ENCODE measurements at regions of chr5 and their contacts with region 1.

Region 1: DNA sequence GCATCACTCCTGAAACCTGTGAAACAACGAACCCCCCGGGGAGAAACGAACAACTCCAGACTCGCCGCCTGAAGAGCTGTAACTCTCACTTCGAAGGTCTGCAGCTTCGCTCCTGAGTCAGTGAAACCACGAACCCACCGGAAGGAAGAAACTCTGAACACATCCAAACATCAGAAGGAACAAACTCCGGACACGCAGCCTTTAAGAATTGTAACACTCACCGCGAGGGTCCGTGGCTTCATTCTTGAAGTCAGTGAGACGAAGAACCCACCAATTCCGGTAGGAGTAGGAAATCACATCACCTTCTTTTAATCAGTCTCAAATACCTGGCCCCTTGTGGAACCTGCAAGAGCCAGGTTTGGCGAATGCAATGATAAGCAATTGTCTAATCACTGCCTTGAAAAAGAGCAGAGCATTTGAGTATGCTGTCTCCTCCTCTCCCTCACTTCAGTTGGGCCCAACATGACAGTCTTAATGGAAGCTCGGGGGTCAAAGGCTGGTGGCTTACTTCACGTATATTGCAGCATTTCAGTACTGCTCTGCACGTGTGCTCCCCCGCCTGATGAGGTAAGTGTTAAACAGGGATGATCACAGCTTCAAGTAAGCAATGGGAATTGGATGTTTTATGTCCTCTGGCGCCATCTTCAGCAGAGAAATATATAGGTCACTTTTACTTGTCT is 473 bp downstream of the IRGM start:
- DNase-seq: peak in 1 of 10 donors; percentile 51
- H3K4me3 ChIP-seq: peak overlapping the region in 2 of 59 donors; percentile 17 to 28
- H3K27ac ChIP-seq: no peak overlapping the region
- H3K27me3 ChIP-seq: no peaks in the 10 kb centered on the region
- CTCF ChIP-seq: peak; percentile 42 to 83 (median 66)

Region 2: DNA sequence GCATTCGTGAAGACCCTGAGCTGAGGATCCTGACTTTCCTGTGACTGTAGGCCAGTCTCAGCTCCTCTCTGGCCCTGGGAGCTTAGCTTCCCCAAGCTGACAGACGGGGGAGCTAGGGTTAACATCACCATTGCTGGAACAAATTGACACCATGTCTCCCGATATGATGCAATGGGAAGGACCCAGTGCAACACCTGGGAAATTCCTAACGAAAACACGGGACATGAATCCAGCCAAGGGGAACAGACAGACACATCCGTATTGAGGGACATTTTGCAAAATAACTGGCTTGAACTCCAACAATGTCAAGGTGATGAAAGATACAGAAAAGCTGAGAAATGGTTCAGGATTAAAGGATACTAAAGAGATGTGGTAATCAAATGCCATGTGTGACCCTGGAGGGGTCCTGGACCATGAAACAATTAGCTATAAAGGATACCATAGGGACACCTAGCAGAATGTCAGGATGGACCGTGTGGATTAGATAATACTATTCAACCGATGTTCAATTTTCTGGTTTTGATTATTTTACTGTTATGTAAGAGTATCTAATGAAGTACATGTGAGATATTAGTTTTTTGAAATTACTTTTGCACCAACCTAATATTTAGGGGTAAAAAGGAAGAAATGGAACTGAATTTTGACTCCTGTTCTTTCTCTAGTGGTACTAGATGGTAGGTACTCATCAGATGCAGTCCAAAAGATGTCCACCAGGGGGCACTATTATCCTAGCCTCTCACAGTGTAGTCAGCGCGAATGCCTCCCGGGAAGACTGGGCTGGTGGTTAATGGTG is 286.2 kb before region 1 on chr5:
- intact Hi-C with region 1: loop called (anchors 2 kb)
- DNase-seq: peak in 9 of 10 donors; percentile 71 to 97 (median 85)
- H3K4me3 ChIP-seq: no peak overlapping the region
- H3K27ac ChIP-seq: peak overlapping the region in 1 of 59 donors; percentile 36
- H3K27me3 ChIP-seq: no peaks in the 10 kb centered on the region
- CTCF ChIP-seq: peak; percentile 86 to 99 (median 97)

Region 3: GRCh38 chr5:150640311-150641005 is 206.3 kb before region 1 on chr5 and contains the start of gene SYNPO:
- intact Hi-C with region 1: no loop called
- DNase-seq: peak in 6 of 10 donors; percentile 56 to 79 (median 67)
- H3K4me3 ChIP-seq: peak within 1 kb of the TSS in 55 of 59 donors; percentile 4 to 61 (median 43)
- H3K27ac ChIP-seq: peak within 1 kb of the TSS in 58 of 59 donors; percentile 55 to 95 (median 86)
- H3K27me3 ChIP-seq: no peaks in the 10 kb centered on the region
- CTCF ChIP-seq: no peak
- total RNA-seq, gene SYNPO: 47.3 to 302 (median 180) TPM

Region 4: DNA sequence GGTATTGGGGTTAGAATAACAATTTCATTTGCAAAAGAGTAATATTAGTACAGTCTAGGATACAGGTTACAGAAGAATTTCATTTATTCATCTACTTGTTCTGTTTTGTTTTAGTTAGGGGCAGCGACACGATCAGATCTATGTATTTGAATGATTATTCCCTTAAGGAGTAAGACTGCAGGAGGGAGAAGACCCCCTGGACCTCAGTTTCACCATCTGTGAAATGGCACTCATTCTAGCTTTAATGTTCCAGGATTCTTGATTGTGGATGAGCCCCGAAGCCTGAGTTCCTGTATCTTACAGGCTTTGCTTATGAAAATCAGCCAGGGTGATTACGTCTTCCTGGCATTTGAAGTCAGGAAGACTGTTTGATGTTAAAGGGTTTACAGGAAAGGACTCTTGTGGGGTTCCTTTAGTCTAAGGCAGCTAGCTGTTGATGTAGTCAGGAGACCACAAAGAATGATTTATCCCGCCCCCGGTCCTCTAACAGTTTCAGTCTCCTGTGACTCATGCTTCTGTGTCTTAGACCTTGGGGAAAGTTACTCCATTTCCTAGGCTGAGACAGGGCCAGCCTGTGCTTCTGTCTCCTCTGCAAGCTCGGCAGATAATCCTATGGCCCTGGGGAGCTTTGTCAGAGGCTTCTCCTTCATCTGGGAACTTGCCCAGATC is 56.7 kb before region 1 on chr5:
- intact Hi-C with region 1: no loop called
- DNase-seq: no peak
- H3K4me3 ChIP-seq: no peak overlapping the region
- H3K27ac ChIP-seq: peak overlapping the region in 13 of 59 donors; percentile 8 to 58 (median 36)
- H3K27me3 ChIP-seq: peaks cover 0 to 3% (median 0%) of the 10 kb centered on the region in 45 donors
- CTCF ChIP-seq: no peak

Region 5: GRCh38 chr5:150801117-150801927 is 45.5 kb before region 1 on chr5:
- intact Hi-C with region 1: loop called in 1 of 2 experiments (anchors 2 kb)
- DNase-seq: no peak
- H3K4me3 ChIP-seq: peak overlapping the region in 53 of 59 donors; percentile 11 to 62 (median 38)
- H3K27ac ChIP-seq: peak overlapping the region in 13 of 59 donors; percentile 6 to 64 (median 34)
- H3K27me3 ChIP-seq: no peaks in the 10 kb centered on the region
- CTCF ChIP-seq: peak in 55 of 56 donors; percentile 18 to 83 (median 65)

Region 6: DNA sequence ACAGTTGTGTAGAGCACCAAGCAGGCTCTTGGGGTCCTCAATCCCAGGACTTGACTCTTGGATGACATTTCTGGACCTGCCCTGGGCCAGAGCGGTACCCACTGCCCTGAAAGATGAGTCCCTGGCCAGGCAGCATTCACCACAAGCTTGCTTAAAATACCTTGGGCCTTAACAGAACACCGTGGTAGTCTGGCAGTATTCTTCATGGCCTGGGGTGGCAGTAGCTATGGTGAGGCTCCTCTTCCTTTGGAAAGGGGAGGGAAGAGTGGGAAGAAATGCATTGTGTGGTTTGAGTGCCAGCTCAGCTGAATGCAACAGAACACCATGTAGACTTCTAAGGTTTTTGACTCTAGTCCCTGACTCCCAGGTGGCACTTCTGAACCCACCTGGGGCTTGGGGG is 29.8 kb before region 1 on chr5:
- intact Hi-C with region 1: loop called in 1 of 2 experiments (anchors 1 kb)
- DNase-seq: no peak
- H3K4me3 ChIP-seq: no peak overlapping the region
- H3K27ac ChIP-seq: no peak overlapping the region
- H3K27me3 ChIP-seq: peaks cover 0 to 4% (median 0%) of the 10 kb centered on the region in 45 donors
- CTCF ChIP-seq: no peak